Ascending aorta (tissue), 2 donors: ENCODE measurements at regions of chr6 and their contacts with region 1.

Region 1: DNA sequence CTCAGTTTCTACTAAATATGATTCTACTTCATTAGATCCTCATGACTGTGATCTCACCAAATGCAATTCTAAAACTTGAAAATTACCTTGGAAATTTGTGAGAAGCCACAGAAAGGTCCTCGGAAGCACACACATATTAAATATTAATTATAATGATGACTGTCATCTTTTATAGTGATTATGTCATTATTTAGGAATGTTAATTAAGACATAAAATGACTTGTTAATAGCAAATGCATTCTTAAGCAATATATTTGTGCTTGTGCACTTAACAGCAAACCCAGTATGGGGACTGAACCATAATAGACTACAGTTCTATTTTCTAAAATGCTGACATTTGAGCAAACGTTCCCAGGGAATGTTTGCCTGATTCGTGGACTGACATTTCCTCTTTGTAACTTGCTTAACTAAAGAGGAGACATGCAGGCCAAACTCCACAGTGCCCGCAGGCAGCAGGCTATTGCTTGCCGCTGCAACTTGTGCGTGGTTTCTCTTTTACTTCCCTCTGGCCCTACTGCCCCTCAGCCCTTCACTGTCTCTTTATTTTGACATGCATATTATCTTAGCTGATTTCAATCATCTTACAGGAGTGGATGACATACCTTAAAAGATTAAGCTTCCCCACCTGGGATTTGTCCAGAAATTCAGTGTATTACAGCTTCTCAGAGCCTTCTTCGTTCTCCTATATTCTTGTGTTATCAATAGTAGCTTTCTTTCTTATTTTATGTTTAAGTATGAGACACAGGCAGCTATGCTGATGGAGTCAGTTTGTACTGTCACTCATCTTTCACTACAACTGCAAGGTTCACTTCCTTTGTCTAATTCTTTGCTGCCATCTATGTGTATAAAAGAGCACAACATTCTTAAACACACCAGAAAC is 141.5 kb downstream of the GMDS start:
- DNase-seq: peak in 1 of 2 donors; percentile 83
- H3K4me3 ChIP-seq: peak overlapping the region; percentile 49 to 68
- H3K27ac ChIP-seq: peak overlapping the region; percentile 77 to 85
- H3K4me1 ChIP-seq: peaks cover 0 to 7% of the 10 kb centered on the region in 2 donors
- H3K27me3 ChIP-seq: no peaks in the 10 kb centered on the region
- CTCF ChIP-seq: peak; percentile 49 to 72 (median 53)

Region 2: DNA sequence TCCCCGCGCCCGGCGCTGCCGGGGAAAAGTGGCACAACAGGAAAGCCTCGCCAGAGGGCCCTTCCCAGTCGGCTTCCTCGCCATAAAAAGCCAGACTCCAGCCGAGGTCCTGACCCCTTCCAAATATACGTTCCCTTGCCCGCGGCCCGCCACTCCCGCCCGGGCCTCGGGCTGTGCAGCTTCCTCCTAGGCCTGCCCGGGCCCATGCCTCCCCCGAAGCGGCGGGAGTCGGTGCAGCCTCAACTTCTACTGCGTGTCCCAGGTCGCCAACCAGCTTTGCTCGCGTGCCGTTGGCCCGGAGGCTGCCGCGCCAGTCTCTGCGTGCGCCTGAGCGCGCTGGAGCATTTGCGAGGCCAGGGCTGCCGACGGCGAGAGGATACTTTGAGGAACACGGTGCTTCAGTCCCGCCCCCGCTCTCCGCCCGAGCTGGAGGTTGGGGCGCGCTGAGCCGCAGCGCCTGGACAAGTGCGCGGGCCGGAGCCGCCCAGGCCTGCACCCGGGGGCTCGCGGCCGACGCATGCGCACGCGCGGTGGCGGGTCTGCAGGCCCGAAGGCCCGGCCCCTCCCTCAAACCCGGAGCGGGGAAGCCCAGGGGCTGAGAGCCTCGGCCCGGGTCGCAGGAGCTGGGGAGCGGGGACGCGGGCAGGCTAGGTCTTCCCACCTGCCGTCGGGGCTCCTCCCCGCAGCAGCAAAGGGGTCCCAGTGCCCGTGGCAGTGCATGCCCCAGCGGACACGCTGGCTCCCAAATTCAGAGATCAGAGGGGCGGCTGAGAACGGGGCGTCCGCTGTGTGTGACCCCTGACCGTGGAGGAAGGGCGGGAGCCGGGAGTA is 484.0 kb before region 1 on chr6:
- intact Hi-C with region 1: loop called (anchors 2 kb)
- DNase-seq: no peak
- H3K4me3 ChIP-seq: peak overlapping the region; percentile 91 to 94
- H3K27ac ChIP-seq: peak overlapping the region; percentile 96 to 100
- H3K4me1 ChIP-seq: peaks cover 6 to 22% of the 10 kb centered on the region in 2 donors
- H3K27me3 ChIP-seq: no peaks in the 10 kb centered on the region
- CTCF ChIP-seq: no peak

Region 3: DNA sequence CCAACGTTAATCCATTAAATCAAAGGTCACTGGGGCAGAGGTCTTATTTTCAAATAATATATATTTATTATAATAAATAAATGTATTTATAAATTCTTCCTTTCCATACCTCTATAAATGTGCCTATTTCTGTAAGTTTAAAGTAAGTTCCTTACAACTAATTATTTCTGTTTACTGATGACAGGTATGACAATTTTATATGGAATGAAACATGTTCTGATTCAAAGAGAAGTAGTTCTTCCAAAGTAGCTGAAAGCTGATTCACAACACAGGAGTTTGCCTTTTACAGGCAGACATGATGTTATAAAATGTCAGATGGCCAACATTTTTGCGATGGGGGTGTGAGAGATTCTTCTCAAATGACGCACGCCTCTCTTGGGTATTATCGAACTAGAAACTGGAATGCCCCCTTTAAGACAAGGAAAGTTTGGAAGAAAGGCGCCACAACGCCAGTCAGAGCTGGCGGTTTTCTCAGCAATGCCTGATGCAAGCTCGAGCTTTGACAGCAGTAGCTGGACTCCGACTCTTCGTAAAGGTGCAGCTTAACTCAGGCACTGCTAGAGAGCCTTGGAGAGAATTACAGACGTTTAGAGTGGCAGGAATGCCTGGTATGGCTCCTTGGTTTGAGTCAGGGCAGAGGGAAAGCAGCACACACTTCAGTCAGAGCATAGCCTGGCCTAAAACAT is 402.1 kb before region 1 on chr6:
- intact Hi-C with region 1: loop called (anchors 1 kb)
- DNase-seq: peak; percentile 25 to 94
- H3K4me3 ChIP-seq: peak overlapping the region in 1 of 2 donors; percentile 28
- H3K27ac ChIP-seq: peak overlapping the region; percentile 83 to 96
- H3K4me1 ChIP-seq: peaks cover 19 to 49% of the 10 kb centered on the region in 2 donors
- H3K27me3 ChIP-seq: no peaks in the 10 kb centered on the region
- CTCF ChIP-seq: no peak

Region 4: GRCh38 chr6:1901556-1901955 is 202.3 kb before region 1 on chr6:
- intact Hi-C with region 1: loop called (anchors 5 kb)
- DNase-seq: no peak
- H3K4me3 ChIP-seq: no peak overlapping the region
- H3K27ac ChIP-seq: peak overlapping the region; percentile 86 to 93
- H3K4me1 ChIP-seq: peaks cover 18 to 37% of the 10 kb centered on the region in 2 donors
- H3K27me3 ChIP-seq: no peaks in the 10 kb centered on the region
- CTCF ChIP-seq: no peak

Region 5: GRCh38 chr6:2037237-2037926 is 66.5 kb before region 1 on chr6:
- intact Hi-C with region 1: no loop called
- DNase-seq: no peak
- H3K4me3 ChIP-seq: no peak overlapping the region
- H3K27ac ChIP-seq: no peak overlapping the region
- H3K4me1 ChIP-seq: no peaks in the 10 kb centered on the region
- H3K27me3 ChIP-seq: no peaks in the 10 kb centered on the region
- CTCF ChIP-seq: peak in 2 of 3 experiments; percentile 35 to 54

Region 6: DNA sequence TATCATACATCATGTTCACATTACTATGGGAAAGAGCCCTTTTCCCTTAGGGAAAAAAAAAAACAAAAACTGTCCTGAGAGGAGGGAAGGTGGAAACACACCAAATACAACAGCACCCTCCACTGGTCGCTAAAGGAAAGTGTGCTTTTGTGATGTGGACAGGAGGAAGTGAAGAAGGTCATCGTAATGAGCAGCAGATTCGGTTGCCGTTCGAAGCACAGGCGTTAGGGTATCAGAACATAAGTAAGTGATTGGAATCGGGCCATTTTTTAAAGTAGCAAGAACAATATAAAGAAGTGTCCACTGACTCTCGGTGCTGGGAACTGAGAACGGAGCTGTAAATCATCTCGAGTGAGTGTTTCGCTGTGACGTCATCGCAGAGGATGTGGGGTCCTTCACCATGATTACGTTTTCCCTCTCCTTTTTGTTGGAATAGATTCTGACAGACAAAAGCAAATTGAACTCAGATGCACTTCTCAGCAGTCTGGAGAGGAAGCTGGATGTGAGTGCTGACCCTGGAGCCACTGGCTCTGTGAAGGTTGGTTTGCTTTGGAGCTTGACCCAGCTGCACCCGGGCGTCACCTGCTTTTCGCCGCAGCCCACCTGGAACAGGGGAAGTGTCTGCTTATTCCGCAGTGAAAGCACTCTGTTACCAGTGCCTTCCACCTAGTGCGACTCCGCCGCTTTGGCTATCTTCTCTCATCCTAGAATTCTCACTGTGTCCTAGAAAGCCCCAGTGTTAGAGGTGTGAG is 345.1 kb after region 1 on chr6:
- intact Hi-C with region 1: loop called (anchors 5 kb)
- DNase-seq: peak in 1 of 2 donors; percentile 76
- H3K4me3 ChIP-seq: peak overlapping the region; percentile 42 to 62
- H3K27ac ChIP-seq: peak overlapping the region; percentile 56 to 59
- H3K4me1 ChIP-seq: peaks cover 3 to 11% of the 10 kb centered on the region in 2 donors
- H3K27me3 ChIP-seq: no peaks in the 10 kb centered on the region
- CTCF ChIP-seq: peak; percentile 45 to 84 (median 76)